Activated naive CD4-positive, alpha-beta T cell treated with anti-CD3 and anti-CD28 coated beads for 36 hours (primary cell): ENCODE measurements at regions of chr5 and their contacts with region 1.

Region 1: GRCh38 chr5:141960449-141961202 is 2.6 kb upstream of the PCDH12 start:
- DNase-seq: peak; percentile 97
- H3K4me3 Mint-ChIP-seq: peak overlapping the region; percentile 33
- H3K27ac Mint-ChIP-seq: peak overlapping the region; percentile 74
- H3K4me1 Mint-ChIP-seq: peaks cover 38% of the 10 kb centered on the region
- H3K27me3 Mint-ChIP-seq: no peaks in the 10 kb centered on the region

Region 2: DNA sequence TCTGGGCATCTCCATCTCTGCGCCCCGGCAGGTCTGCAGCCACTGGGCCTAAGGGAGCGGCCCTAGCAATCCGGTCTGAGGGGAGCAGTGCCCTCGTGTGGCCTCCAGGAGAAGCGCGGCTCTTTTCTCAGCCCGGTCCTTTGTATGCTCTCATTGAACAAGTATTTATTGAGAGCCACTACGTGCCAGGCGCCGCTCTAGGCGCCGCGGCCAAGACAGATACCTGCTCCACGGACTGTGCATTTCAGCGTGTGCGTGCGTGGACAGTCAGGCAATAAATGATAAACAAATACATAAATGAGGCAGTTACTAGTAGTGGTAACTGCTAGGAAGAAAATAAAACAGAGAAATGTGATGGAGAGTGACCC is 1602.9 kb before region 1 on chr5:
- CTCF ChIA-PET with region 1: no interaction called
- intact Hi-C with region 1: no loop called
- DNase-seq: peak; percentile 85
- H3K4me3 Mint-ChIP-seq: peak overlapping the region; percentile 56
- H3K27ac Mint-ChIP-seq: no peak overlapping the region
- H3K4me1 Mint-ChIP-seq: peaks cover 8% of the 10 kb centered on the region
- H3K27me3 Mint-ChIP-seq: peaks cover 3% of the 10 kb centered on the region

Region 3: GRCh38 chr5:141657937-141658545 is 302.6 kb before region 1 on chr5:
- CTCF ChIA-PET with region 1: interaction called, 18 read pairs
- intact Hi-C with region 1: no loop called
- DNase-seq: no peak
- H3K4me3 Mint-ChIP-seq: no peak overlapping the region
- H3K27ac Mint-ChIP-seq: no peak overlapping the region
- H3K4me1 Mint-ChIP-seq: no peaks in the 10 kb centered on the region
- H3K27me3 Mint-ChIP-seq: no peaks in the 10 kb centered on the region

Region 4: DNA sequence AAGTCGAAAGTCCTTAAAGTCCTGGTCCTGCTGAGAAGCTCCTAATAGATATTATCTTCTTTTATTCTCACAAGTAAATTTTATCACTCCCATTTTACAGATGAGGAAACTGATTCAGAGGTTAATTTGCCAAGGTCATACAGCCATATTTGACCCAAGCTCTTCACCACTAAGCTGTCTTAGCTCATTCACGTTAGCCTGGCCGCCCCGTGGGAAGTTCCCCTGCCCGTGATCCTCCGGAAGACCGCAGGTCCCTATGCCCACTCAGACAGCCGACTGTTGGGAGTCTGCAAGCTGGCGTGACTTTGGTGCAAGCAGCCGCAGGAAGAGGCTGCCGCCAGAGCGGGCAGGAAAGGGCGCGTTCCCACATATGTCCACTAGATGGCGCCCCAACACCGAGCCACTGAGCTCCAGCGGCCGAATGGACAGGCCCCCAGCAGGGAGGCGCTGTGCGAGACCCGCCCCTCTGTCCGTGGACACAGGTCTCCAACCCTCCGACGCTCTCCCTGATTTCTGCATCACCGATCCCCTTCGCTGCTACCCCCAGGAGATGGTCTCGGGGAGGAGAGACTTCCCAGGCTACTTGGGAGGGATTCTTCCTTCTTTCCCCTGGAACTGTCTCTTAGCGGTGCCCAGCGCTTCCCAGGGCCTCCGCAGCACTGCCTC is 268.6 kb before region 1 on chr5:
- CTCF ChIA-PET with region 1: interaction called, 134 read pairs
- intact Hi-C with region 1: loop called (anchors 1 kb)
- DNase-seq: peak; percentile 90
- H3K4me3 Mint-ChIP-seq: peak overlapping the region; percentile 53
- H3K27ac Mint-ChIP-seq: no peak overlapping the region
- H3K4me1 Mint-ChIP-seq: peaks cover 20% of the 10 kb centered on the region
- H3K27me3 Mint-ChIP-seq: peaks cover 7% of the 10 kb centered on the region

Region 5: DNA sequence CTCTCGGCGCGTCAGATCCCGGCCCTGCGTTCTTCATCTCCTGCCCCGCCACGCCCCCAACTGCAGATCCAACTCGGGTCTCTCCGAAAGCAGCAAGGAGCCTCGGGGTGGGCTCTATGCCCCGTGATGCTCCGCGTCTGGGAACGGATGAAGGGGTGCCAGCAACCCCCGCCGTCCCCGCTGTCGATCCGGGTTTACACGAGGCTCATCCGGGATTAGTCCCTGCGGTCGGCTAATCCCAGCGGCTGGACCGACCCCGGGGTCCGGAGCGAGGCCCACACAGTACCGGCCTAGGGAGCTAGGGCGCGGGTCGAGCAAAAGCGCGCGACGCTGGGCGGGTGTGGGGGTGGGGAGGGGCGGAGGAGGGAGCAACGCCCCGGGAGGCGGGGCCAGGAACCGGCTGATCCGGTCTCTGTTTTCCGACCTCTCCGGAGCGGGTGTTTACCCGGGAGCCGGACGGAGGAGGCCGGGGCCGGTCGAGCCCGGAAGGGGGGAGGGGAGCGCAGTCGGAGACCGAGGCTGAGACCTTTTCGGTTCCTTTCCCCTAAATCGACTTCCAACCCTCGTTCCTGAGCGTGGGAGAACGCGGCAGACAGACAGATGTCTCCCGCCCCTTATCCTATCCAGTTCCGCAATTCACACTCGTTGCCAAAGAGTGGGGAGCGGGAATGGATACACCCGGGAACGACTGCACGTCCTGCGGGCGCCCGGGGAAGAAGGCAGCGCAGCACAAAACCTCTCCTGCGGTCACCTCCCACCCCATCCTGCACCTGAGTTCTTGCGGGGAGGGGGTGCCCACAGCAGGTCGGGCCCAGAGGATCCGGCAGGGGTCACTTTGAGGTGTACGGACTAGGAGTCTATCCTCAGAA is 111.0 kb before region 1 on chr5:
- CTCF ChIA-PET with region 1: interaction called, 4 read pairs
- intact Hi-C with region 1: loop called (anchors 2 kb)
- DNase-seq: peak; percentile 84
- H3K4me3 Mint-ChIP-seq: peak overlapping the region; percentile 86
- H3K27ac Mint-ChIP-seq: peak overlapping the region; percentile 75
- H3K4me1 Mint-ChIP-seq: peaks cover 16% of the 10 kb centered on the region
- H3K27me3 Mint-ChIP-seq: no peaks in the 10 kb centered on the region

Region 6: DNA sequence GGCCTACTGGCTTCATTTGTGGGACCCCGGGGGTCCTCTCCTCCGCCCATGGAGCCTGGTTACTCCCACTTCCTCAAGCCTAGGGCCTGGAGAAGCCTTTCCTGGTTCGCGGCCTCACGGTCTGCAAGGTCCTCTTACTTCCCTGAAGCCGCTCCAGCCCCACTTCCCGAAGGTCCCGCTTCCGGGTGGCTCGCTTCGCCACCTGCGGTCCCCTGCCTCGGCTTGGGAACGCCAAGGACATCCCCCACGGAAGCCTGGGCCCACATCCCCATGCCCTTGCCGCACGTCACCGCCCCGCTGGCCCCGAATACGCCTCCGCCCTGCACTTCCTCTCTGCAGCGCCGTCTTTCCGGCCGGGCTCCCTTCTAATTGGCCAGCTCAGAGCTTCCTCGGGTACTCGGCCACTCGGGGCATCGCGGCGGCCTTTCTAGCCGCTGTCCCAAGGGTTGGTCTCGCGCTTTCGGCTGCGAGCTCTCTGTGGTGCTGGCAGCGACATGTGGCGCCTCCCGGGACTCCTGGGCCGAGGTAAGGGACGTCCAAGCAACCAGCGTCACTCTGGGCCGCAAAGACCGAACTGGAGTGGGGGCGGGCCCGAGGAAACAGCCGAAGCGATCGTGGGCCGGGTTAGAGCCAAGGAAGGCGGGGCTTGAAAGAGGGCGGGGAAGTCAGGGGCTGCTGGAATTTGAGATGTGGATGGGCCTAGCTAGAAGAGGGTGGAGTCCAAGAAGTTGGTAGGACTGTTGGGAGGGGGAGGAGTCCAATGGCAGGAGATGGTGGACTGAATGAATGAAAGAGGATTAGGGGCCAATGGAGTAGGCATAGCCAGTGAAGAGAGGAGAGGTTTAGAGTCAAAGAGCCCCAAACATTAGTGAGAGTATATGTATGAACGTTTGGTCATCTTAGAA is 36.9 kb before region 1 on chr5 and contains the start of gene DELE1:
- CTCF ChIA-PET with region 1: interaction called, 58 read pairs
- intact Hi-C with region 1: loop called (anchors 1 kb)
- DNase-seq: peak; percentile 95
- H3K4me3 Mint-ChIP-seq: peak within 1 kb of the TSS; percentile 90
- H3K27ac Mint-ChIP-seq: peak within 1 kb of the TSS; percentile 93
- H3K4me1 Mint-ChIP-seq: peaks cover 18% of the 10 kb centered on the region
- H3K27me3 Mint-ChIP-seq: no peaks in the 10 kb centered on the region
- total RNA-seq, gene DELE1: 48.0 to 50.6 TPM

Region 7: DNA sequence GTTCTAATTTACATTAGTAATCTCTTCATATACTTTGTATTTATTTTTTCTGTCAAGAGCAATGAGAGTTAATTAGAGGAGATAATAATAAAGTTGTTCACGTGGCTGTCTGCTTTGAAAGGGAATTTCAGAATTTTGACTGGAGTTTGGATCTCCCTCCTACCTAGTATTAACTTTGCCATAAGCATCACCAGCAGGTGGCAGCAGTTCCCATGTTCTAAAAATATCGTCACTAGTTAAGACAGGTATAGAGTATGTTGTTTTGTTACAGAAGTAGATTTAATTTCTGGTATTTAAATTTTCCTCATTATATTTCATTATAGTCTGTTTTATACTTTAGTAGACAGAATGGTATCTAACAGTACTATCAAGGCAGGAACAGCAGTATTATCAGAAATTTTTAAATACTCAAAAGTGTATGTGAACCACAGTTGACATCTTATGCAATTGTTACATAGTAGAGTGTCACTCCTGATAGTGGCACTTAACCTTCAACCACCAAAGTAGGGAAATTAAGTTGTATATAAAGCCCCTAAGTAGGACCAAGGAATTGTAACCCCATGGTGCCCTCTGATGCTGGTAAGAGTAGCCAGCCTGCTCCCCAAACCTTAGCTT is 31.8 kb after region 1 on chr5:
- CTCF ChIA-PET with region 1: interaction called, 24 read pairs
- intact Hi-C with region 1: no loop called
- DNase-seq: peak; percentile 95
- H3K4me3 Mint-ChIP-seq: no peak overlapping the region
- H3K27ac Mint-ChIP-seq: peak overlapping the region; percentile 53
- H3K4me1 Mint-ChIP-seq: peaks cover 13% of the 10 kb centered on the region
- H3K27me3 Mint-ChIP-seq: no peaks in the 10 kb centered on the region